Activated CD8-positive, alpha-beta T cell treated with anti-CD3 and anti-CD28 coated beads, Interleukin-2, amount 10 ng/mL, durations not matched to agents 7 days and 5 days (primary cell): ENCODE measurements at regions of chr3 and their contacts with region 1.

Region 1: GRCh38 chr3:47601281-47601680 is 22.6 kb upstream of the CSPG5 start:
- DNase-seq: no peak
- ATAC-seq: no peak
- H3K4me3 Mint-ChIP-seq: no peak overlapping the region
- H3K27ac Mint-ChIP-seq: no peak overlapping the region
- H3K4me1 Mint-ChIP-seq: no peaks in the 10 kb centered on the region
- H3K27me3 Mint-ChIP-seq: no peaks in the 10 kb centered on the region

Region 2: GRCh38 chr3:47778746-47779145 is 177.5 kb after region 1 on chr3:
- CTCF ChIA-PET with region 1: no interaction called
- POLR2A ChIA-PET with region 1: interaction called, 10 read pairs
- DNase-seq: no peak
- ATAC-seq: no peak
- H3K4me3 Mint-ChIP-seq: no peak overlapping the region
- H3K27ac Mint-ChIP-seq: no peak overlapping the region
- H3K4me1 Mint-ChIP-seq: peaks cover 23% of the 10 kb centered on the region
- H3K27me3 Mint-ChIP-seq: no peaks in the 10 kb centered on the region